ENCODE measurements at regions of chr7 and their contacts with region 1.

Region 1: GRCh38 chr7:131654668-131655326 is 98.4 kb upstream of the PODXL start:
- DNase-seq: peak; percentile 40
- H3K4me3 ChIP-seq: no peak overlapping the region
- H3K27ac ChIP-seq: no peak overlapping the region
- H3K4me1 ChIP-seq: no peaks in the 10 kb centered on the region
- H3K27me3 ChIP-seq: no peaks in the 10 kb centered on the region
- CTCF ChIP-seq: peak; percentile 91 to 95

Region 2: DNA sequence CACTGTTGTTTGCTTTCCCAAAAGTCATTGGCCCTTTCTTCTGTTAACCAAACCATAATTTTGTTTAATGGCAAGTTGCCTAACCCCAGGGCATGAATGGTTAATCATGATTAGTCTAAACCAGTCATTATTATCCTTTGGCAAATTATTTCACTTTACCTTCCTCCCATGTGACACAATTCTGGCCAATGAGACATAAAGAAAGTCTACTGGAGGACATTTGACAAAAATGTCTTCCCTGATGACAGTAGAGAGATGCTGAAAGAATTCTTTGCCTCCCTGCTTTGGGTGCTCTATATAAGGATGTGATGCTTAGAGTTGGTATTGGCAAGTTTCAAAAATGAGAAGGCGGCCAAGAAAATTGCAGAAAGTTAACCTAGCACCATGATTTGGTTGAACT is 200.3 kb before region 1 on chr7:
- CTCF ChIA-PET with region 1: no interaction called
- dilution Hi-C with region 1: no loop called
- in situ Hi-C with region 1: no loop called
- intact Hi-C with region 1: no loop called
- DNase-seq: no peak
- H3K4me3 ChIP-seq: no peak overlapping the region
- H3K27ac ChIP-seq: no peak overlapping the region
- H3K4me1 ChIP-seq: peaks cover 7% of the 10 kb centered on the region
- H3K27me3 ChIP-seq: no peaks in the 10 kb centered on the region
- CTCF ChIP-seq: no peak

Region 3: DNA sequence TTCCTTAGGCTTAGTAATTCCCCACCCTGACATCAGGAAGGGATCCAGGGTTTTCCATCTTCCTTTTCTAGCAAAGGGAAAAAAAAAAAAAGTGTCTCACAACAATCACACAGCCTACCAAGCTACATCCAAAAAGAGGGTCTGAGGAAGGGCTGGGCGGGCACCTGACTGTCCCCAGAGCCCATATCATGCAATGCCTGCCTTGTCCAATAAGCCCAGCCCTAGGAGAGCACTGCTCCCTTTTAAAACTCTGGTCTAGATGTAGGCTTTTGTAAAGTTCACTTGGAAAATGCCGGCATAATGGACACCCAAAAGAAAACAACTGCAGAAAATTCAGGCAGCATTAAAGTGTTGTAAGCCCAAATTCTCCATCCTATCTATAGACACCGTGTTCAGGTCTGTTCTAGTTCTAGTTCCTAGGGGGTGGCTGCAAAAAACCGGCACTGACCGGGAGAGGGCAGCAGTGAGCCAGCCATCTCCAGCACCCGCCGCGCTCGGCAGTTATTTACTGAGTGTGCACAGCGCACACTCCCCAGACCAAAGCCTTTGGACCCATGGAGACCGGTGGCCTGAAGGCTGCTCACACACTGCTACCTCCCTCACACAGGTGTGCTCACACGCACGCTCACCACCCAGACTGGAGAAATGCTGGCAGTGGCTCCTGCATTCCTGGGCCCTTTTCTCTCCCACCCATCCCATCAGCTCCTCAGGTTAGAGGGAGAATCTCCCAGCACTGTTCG is 147.0 kb before region 1 on chr7:
- CTCF ChIA-PET with region 1: no interaction called
- dilution Hi-C with region 1: no loop called
- in situ Hi-C with region 1: loop called (anchors 5 to 10 kb)
- intact Hi-C with region 1: loop called (anchors 1 kb)
- DNase-seq: peak; percentile 52
- H3K4me3 ChIP-seq: no peak overlapping the region
- H3K27ac ChIP-seq: no peak overlapping the region
- H3K4me1 ChIP-seq: no peaks in the 10 kb centered on the region
- H3K27me3 ChIP-seq: peaks cover 3% of the 10 kb centered on the region
- CTCF ChIP-seq: peak; percentile 89 to 96

Region 4: DNA sequence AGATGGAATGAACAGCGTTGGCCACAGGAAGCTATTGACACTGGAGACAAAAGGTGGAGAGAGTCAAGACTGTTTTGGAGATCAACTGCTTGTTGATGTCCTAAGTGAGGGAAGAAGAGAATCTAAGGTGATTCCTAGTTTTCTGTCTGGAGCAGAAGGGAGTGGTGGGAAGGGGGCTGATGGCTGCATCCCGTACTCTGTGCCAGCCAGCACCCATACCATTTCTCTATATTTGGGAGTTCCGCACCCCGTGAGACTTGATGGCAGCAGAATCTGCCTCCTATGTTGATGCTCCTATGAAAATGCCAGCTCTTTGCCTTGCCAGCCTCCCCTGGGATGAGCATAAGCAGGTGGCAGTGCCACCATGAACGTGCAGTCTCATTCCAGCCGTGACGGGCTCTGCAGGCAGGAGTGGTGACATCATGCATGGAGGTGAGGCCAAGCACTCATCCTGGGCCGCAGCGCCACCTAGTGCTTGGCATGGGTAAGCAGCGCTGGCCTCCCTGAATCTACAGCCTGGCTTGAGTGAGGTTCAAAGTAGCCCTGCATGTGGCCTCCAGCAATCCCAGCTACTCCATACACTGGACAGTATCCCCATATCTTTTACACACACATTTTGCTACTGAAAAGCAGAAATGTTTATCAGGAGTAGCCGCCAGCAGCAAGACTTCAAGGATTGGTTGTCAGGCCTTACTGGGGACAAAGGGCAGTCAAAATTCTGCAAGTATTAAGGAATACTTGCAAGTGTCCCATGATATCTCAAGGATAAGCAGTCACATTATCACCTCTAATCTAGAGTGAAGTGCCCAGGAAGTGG is 141.3 kb before region 1 on chr7:
- CTCF ChIA-PET with region 1: no interaction called
- dilution Hi-C with region 1: no loop called
- in situ Hi-C with region 1: loop called (anchors 5 to 10 kb)
- intact Hi-C with region 1: loop called (anchors 1 kb)
- DNase-seq: peak; percentile 64
- H3K4me3 ChIP-seq: no peak overlapping the region
- H3K27ac ChIP-seq: no peak overlapping the region
- H3K4me1 ChIP-seq: no peaks in the 10 kb centered on the region
- H3K27me3 ChIP-seq: no peaks in the 10 kb centered on the region
- CTCF ChIP-seq: peak; percentile 97 to 99

Region 5: GRCh38 chr7:131544449-131545301 is 110.1 kb before region 1 on chr7:
- CTCF ChIA-PET with region 1: no interaction called
- dilution Hi-C with region 1: no loop called
- in situ Hi-C with region 1: no loop called
- intact Hi-C with region 1: loop called (anchors 1 kb)
- DNase-seq: no peak
- H3K4me3 ChIP-seq: no peak overlapping the region
- H3K27ac ChIP-seq: no peak overlapping the region
- H3K4me1 ChIP-seq: peaks cover 3% of the 10 kb centered on the region
- H3K27me3 ChIP-seq: no peaks in the 10 kb centered on the region
- CTCF ChIP-seq: peak in 1 of 2 donors; percentile 22